CD8-positive, alpha-beta T cell (primary cell): ENCODE measurements at regions of chr20 and their contacts with region 1.

Region 1: DNA sequence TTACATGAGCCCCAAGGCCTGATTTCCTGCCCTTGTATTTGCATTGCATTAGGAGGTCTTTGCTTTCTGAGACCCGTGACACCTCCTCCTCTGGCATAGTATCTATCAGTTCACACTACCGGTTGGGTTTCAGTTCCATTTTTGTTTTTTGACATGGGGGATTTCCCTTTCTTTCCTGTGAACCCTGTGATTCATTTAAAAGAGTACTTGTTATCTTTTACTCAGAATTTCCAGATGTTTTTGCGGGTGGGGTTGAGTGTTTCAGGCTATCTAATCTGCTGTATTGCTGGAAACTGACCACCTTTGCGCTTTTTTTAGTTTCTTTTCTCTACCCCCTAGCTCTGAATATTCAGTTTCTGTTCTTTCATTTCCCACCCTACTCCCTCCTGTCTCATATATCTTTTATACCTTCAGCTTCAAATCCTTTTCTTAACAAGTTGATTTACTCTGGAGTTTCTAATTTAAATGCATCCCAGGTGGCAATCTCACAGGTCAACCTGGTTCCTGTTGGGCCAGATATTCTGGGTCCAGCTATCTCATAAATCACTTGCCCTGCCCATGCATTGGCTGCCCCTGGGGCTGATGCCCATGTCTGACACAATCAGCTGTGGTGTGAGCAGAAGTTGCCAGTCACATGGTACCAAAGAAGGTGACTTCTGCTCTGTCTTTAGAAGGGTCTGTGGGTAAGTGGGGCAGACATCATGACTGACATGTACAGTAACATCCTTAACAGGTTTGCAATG is 14.3 kb upstream of the NCOA3 start:
- DNase-seq: peak in 7 of 9 experiments; percentile 22 to 91 (median 53)
- ATAC-seq: peak; percentile 85
- H3K4me3 ChIP-seq: peak overlapping the region; percentile 6 to 13
- H3K4me3 Mint-ChIP-seq: peak overlapping the region; percentile 51
- H3K27ac ChIP-seq: peak overlapping the region; percentile 19 to 78
- H3K27ac Mint-ChIP-seq: peak overlapping the region; percentile 84
- H3K4me1 ChIP-seq: peaks cover 23% of the 10 kb centered on the region
- H3K4me1 Mint-ChIP-seq: peaks cover 30% of the 10 kb centered on the region
- H3K27me3 ChIP-seq: no peaks in the 10 kb centered on the region
- H3K27me3 Mint-ChIP-seq: no peaks in the 10 kb centered on the region
- CTCF ChIP-seq: no peak

Region 2: DNA sequence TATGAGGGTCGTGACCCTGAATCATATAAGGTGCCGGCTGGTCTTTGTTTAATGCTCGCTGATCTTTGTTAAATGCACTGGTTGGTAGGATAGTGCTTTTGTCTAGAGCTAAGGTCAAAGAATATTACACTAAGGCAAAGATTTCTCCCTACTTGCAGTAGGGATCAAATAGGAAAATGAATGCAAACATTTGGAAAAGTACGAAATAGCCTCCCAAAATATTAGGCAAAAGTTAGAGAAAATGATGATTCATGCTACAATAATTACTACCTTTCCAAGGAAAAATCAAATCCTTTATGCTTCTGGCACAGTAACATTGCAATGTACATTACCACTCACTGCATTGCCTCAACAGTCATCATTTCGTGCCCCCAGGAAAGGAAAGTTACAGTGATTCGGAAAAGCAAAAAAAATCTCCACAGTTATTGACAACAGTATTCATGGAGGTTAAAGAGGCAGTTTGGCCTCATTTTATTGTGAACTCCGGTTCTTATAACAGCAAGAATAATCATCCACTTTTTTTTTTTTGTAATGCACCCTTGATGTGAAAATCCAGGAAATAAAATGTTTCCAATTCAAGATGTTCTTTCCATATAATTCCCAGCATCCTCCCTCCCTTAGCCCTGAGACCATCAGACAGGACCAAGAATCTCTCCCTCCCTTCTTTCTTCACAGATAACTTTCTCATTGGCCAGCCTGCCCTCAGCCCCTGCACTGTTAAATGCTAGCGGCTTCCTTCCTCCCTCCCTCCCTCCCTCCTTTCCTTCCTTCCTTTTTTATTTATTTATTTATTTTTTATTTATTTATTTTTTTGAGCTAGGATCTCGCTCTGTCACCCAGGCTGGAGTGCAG is 69.1 kb before region 1 on chr20:
- CTCF ChIA-PET with region 1: no interaction called
- POLR2A ChIA-PET with region 1: no interaction called
- intact Hi-C with region 1: loop called in 1 of 2 experiments (anchors 5 kb)
- DNase-seq: no peak
- ATAC-seq: no peak
- H3K4me3 ChIP-seq: no peak overlapping the region
- H3K4me3 Mint-ChIP-seq: no peak overlapping the region
- H3K27ac ChIP-seq: no peak overlapping the region
- H3K27ac Mint-ChIP-seq: peak overlapping the region; percentile 52
- H3K4me1 ChIP-seq: peaks cover 26% of the 10 kb centered on the region
- H3K4me1 Mint-ChIP-seq: peaks cover 28% of the 10 kb centered on the region
- H3K27me3 ChIP-seq: no peaks in the 10 kb centered on the region
- H3K27me3 Mint-ChIP-seq: no peaks in the 10 kb centered on the region
- CTCF ChIP-seq: no peak

Region 3: GRCh38 chr20:47468290-47469050 is 18.9 kb before region 1 on chr20:
- CTCF ChIA-PET with region 1: no interaction called
- POLR2A ChIA-PET with region 1: no interaction called
- intact Hi-C with region 1: no loop called
- DNase-seq: peak in 1 of 9 experiments; percentile 12
- ATAC-seq: no peak
- H3K4me3 ChIP-seq: no peak overlapping the region
- H3K4me3 Mint-ChIP-seq: no peak overlapping the region
- H3K27ac ChIP-seq: no peak overlapping the region
- H3K27ac Mint-ChIP-seq: no peak overlapping the region
- H3K4me1 ChIP-seq: no peaks in the 10 kb centered on the region
- H3K4me1 Mint-ChIP-seq: no peaks in the 10 kb centered on the region
- H3K27me3 ChIP-seq: no peaks in the 10 kb centered on the region
- H3K27me3 Mint-ChIP-seq: no peaks in the 10 kb centered on the region
- CTCF ChIP-seq: no peak